ENCODE measurements at regions of chr10 and their contacts with region 1.

Region 1: GRCh38 chr10:114821293-114821914 is at the start of gene FHIP2A:
- DNase-seq: peak; percentile 89
- ATAC-seq: peak; percentile 87
- H3K4me3 Mint-ChIP-seq: peak within 1 kb of the TSS; percentile 95
- H3K27ac Mint-ChIP-seq: peak within 1 kb of the TSS; percentile 89
- H3K4me1 Mint-ChIP-seq: peaks cover 38% of the 10 kb centered on the region
- H3K27me3 Mint-ChIP-seq: peaks cover 2% of the 10 kb centered on the region
- total RNA-seq, gene FHIP2A: 18.4 to 18.6 TPM

Region 2: GRCh38 chr10:113854011-113854760 is 967.2 kb before region 1 on chr10 and contains the starts of genes DCLRE1A and NHLRC2:
- CTCF ChIA-PET with region 1: no interaction called
- POLR2A ChIA-PET with region 1: no interaction called
- intact Hi-C with region 1: loop called in 1 of 2 experiments (anchors 2 kb)
- DNase-seq: peak; percentile 77
- ATAC-seq: peak; percentile 51
- H3K4me3 Mint-ChIP-seq: peak within 1 kb of the TSS; percentile 80
- H3K27ac Mint-ChIP-seq: peak within 1 kb of the TSS; percentile 97
- H3K4me1 Mint-ChIP-seq: peaks cover 39% of the 10 kb centered on the region
- H3K27me3 Mint-ChIP-seq: no peaks in the 10 kb centered on the region
- total RNA-seq, gene DCLRE1A: 12.5 to 14.4 TPM
- total RNA-seq, gene NHLRC2: 20.1 to 22.3 TPM

Region 3: GRCh38 chr10:114492351-114493037 is 328.9 kb before region 1 on chr10:
- CTCF ChIA-PET with region 1: interaction called, 3 read pairs
- POLR2A ChIA-PET with region 1: no interaction called
- intact Hi-C with region 1: loop called in 1 of 2 experiments (anchors 2 kb)
- DNase-seq: peak; percentile 69
- ATAC-seq: peak; percentile 60
- H3K4me3 Mint-ChIP-seq: peak overlapping the region; percentile 34
- H3K27ac Mint-ChIP-seq: peak overlapping the region; percentile 92
- H3K4me1 Mint-ChIP-seq: peaks cover 90% of the 10 kb centered on the region
- H3K27me3 Mint-ChIP-seq: no peaks in the 10 kb centered on the region

Region 4: DNA sequence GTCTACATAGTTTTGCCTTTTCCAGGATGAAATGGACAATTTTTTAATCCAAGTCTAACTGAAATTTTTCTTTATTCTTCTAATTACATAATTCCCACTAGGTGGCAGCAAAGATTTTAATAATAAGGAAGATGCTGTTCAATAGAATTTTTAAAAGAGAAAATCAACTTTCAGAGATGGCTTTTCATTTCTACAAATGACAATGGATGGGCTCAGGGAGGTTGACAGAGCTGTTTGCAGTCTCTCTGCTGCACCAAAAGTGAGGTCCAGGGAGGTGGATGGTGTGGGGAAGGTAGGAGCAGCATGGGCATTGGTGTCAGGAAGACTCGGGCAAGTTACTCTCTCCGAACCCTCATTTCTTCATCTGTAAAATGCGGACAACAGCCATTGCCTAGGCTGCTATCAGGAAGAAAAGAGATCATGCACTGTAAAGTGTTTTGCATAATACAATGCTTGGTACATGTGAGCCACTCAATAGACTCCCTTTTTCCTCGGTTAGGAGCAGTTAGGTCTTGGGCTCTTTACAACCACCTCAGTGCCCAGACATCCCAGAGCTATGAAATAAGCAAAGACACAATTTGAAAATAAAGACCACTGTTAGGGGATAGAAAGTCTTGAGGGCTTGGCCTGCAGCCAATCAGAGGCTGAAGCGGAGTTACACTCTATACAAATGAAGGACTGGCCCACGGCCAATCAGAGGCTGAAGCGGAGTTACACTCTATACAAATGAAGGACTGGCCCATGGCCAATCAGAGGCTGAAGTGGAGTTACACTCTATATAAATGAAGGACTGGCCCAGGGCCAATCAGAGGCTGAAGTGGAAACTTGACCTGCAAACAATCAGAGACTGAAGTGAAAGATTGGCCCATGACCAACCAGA is 270.4 kb before region 1 on chr10:
- CTCF ChIA-PET with region 1: interaction called, 3 read pairs
- POLR2A ChIA-PET with region 1: no interaction called
- intact Hi-C with region 1: loop called in 1 of 2 experiments (anchors 2 kb)
- DNase-seq: no peak
- ATAC-seq: no peak
- H3K4me3 Mint-ChIP-seq: no peak overlapping the region
- H3K27ac Mint-ChIP-seq: no peak overlapping the region
- H3K4me1 Mint-ChIP-seq: peaks cover 28% of the 10 kb centered on the region
- H3K27me3 Mint-ChIP-seq: no peaks in the 10 kb centered on the region

Region 5: DNA sequence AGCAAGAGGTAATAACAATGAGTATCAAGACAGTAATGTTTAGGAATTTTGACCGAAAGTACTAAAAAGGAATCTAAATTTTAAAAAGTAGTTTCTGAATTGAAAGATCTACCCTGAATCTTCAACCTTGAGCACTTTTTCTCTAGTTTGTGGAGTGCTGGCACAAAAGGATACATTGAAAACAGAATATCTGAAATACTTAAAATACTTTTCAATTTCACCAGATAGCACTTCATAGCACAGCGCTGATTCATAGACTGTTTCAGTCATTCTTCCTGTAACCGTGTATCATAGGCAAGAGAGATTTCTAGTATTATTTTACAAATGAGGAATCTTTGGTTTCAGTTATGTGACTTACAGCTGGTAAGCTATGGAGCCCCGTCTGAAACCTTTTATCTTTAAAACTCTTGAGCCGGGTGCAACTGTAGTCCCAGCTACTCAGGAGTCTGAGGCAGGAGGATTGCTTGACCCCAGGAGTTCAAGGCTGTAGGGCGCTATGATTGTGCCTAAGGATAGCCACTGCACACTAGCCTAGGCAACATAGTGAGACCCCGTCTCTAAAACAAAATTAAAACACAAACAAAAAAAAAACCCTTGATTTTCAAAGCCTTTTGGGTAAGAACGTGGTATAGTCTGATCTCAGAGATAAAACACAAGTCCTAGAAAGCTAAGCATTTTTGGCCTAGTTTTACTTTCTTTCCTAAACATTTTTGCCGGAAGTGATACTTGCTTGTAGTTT is 35.3 kb after region 1 on chr10:
- CTCF ChIA-PET with region 1: interaction called, 3 read pairs
- POLR2A ChIA-PET with region 1: no interaction called
- intact Hi-C with region 1: loop called (anchors 1 kb)
- DNase-seq: no peak
- ATAC-seq: peak; percentile 93
- H3K4me3 Mint-ChIP-seq: peak overlapping the region; percentile 19
- H3K27ac Mint-ChIP-seq: peak overlapping the region; percentile 90
- H3K4me1 Mint-ChIP-seq: peaks cover 34% of the 10 kb centered on the region
- H3K27me3 Mint-ChIP-seq: no peaks in the 10 kb centered on the region

Measured in activated CD4-positive, alpha-beta T cell treated with anti-CD3 and anti-CD28 coated beads for 36 hours (primary cell).